Mammary epithelial cell (primary cell): ENCODE measurements at regions of chr17 and their contacts with region 1.

Region 1: GRCh38 chr17:60641810-60642220 is 35.8 kb upstream of the BCAS3 start:
- DNase-seq: peak; percentile 59
- H3K4me3 ChIP-seq: no peak overlapping the region
- H3K27ac ChIP-seq: no peak overlapping the region
- H3K4me1 ChIP-seq: peaks cover 8% of the 10 kb centered on the region
- H3K27me3 ChIP-seq: no peaks in the 10 kb centered on the region
- CTCF ChIP-seq: peak; percentile 35 to 62

Region 2: DNA sequence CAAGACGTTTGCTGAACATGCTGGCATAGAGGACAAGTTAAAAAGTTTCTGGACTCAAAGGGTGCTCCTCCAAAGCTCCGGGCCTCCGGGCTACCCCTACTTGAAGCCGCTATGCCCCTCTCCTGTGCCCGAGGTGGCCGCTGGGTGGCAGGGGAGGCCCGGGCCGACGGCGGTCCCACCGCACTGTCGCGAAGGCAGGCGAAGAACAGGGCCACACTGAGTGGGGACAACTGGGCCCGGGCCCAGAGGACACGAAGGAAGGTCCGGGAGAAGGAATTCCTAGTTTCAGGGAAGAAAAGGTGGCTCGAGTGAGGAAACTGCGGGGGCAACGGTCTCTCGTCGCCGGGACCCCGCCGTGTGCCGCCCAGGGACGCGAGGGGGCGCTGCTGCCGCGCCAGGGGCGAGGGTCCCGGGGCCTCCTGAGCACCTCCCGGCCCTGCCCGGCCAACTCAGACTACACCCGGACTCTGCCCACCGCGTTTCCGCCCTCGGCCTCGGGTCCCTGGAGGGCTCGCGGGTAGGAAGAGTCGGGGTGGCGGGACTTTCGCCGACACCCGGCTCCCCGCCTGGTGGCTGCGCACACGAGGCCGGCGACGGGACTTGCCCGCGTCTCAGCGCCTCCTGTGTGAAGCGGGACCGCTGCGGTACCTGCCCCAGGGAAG is 220.4 kb before region 1 on chr17:
- CTCF ChIA-PET with region 1: no interaction called
- dilution Hi-C with region 1: no loop called
- in situ Hi-C with region 1: no loop called
- intact Hi-C with region 1: loop called (anchors 1 kb)
- DNase-seq: peak; percentile 26
- H3K4me3 ChIP-seq: peak overlapping the region; percentile 29 to 45 (median 35)
- H3K27ac ChIP-seq: no peak overlapping the region
- H3K4me1 ChIP-seq: peaks cover 9% of the 10 kb centered on the region
- H3K27me3 ChIP-seq: no peaks in the 10 kb centered on the region
- CTCF ChIP-seq: peak; percentile 35 to 74

Region 3: GRCh38 chr17:60435244-60436167 is 206.3 kb before region 1 on chr17:
- CTCF ChIA-PET with region 1: no interaction called
- dilution Hi-C with region 1: no loop called
- in situ Hi-C with region 1: no loop called
- intact Hi-C with region 1: loop called (anchors 5 kb)
- DNase-seq: peak; percentile 71
- H3K4me3 ChIP-seq: no peak overlapping the region
- H3K27ac ChIP-seq: no peak overlapping the region
- H3K4me1 ChIP-seq: peaks cover 5% of the 10 kb centered on the region
- H3K27me3 ChIP-seq: peaks cover 2% of the 10 kb centered on the region
- CTCF ChIP-seq: peak; percentile 88 to 89

Region 4: DNA sequence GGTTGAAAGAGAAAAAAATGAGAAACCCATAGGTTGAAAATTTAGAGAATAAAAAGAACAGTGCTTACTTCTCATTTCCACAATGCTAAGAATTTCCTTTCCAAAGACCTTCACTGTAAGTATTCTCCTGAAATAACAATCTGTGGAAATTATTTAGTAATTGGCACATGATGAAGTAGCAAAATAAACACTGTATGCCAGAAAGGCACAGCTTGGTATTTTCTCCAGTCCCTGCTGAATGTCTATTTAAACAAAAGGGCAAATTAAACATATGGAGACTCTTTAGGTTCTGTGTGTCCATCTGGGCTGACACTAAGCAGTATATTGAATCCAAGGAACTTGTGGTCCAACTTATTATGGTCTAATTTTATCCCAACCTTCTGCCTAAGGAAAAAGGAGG is 173.4 kb before region 1 on chr17:
- CTCF ChIA-PET with region 1: no interaction called
- dilution Hi-C with region 1: no loop called
- in situ Hi-C with region 1: loop called in 1 of 2 experiments (anchors 25 kb)
- intact Hi-C with region 1: no loop called
- DNase-seq: no peak
- H3K4me3 ChIP-seq: no peak overlapping the region
- H3K27ac ChIP-seq: no peak overlapping the region
- H3K4me1 ChIP-seq: peaks cover 5% of the 10 kb centered on the region
- H3K27me3 ChIP-seq: no peaks in the 10 kb centered on the region
- CTCF ChIP-seq: no peak

Region 5: GRCh38 chr17:60563746-60564145 is 78.1 kb before region 1 on chr17:
- CTCF ChIA-PET with region 1: no interaction called
- dilution Hi-C with region 1: no loop called
- in situ Hi-C with region 1: no loop called
- intact Hi-C with region 1: loop called (anchors 2 kb)
- DNase-seq: no peak
- H3K4me3 ChIP-seq: no peak overlapping the region
- H3K27ac ChIP-seq: no peak overlapping the region
- H3K4me1 ChIP-seq: no peaks in the 10 kb centered on the region
- H3K27me3 ChIP-seq: no peaks in the 10 kb centered on the region
- CTCF ChIP-seq: no peak

Region 6: DNA sequence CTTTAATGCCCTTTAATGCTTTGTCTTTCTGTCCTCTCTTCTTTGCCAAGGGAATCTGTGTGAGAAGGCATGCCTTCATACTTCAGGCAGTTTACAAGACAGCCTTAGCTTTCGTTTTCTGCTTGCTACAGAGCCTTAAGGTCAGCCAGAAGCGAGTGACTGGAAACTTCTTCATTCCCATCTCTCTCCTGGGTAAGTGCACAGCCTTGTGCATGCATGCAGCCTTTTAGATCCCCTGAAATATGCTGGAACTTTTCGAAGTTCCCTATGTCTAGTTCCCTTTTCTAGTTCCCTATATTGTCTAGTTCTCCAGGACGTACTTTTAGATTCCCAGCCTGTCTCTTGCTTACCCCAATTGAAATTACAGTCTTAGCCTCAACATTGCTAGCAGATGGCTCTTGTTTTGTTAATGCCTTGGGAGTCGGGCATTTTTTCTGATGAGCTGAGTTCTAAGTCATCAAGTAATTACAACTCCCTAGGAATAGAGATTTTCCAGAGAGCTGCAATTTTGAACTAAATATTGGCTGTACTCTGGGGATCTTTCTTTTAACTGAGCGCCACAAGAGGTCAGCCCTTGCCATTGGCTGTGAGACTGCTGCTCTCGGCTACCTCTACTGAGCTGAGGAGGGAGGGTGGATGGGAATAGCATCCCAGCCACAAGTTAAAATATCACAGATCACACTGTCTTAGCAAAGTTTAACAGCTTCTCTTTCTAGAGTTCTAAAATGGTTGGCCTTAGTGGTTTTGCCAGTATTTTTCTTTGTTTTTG is 64.5 kb before region 1 on chr17:
- CTCF ChIA-PET with region 1: interaction called, 3 read pairs
- dilution Hi-C with region 1: no loop called
- in situ Hi-C with region 1: no loop called
- intact Hi-C with region 1: loop called (anchors 2 kb)
- DNase-seq: no peak
- H3K4me3 ChIP-seq: peak overlapping the region; percentile 31 to 41 (median 32)
- H3K27ac ChIP-seq: no peak overlapping the region
- H3K4me1 ChIP-seq: no peaks in the 10 kb centered on the region
- H3K27me3 ChIP-seq: no peaks in the 10 kb centered on the region
- CTCF ChIP-seq: peak in 1 of 2 donors; percentile 23

Region 7: GRCh38 chr17:60599620-60600489 is 42.0 kb before region 1 on chr17 and contains the start of gene PPM1D:
- CTCF ChIA-PET with region 1: no interaction called
- dilution Hi-C with region 1: no loop called
- in situ Hi-C with region 1: no loop called
- intact Hi-C with region 1: loop called (anchors 1 kb)
- DNase-seq: peak; percentile 98
- H3K4me3 ChIP-seq: peak within 1 kb of the TSS; percentile 75 to 90 (median 87)
- H3K27ac ChIP-seq: peak within 1 kb of the TSS; percentile 77
- H3K4me1 ChIP-seq: peaks cover 12% of the 10 kb centered on the region
- H3K27me3 ChIP-seq: no peaks in the 10 kb centered on the region
- CTCF ChIP-seq: no peak
- total RNA-seq, gene PPM1D: 9.3 to 9.5 TPM

Region 8: GRCh38 chr17:61057257-61057656 is 415.4 kb after region 1 on chr17:
- CTCF ChIA-PET with region 1: no interaction called
- dilution Hi-C with region 1: no loop called
- in situ Hi-C with region 1: no loop called
- intact Hi-C with region 1: no loop called
- DNase-seq: peak; percentile 18
- H3K4me3 ChIP-seq: no peak overlapping the region
- H3K27ac ChIP-seq: no peak overlapping the region
- H3K4me1 ChIP-seq: no peaks in the 10 kb centered on the region
- H3K27me3 ChIP-seq: no peaks in the 10 kb centered on the region
- CTCF ChIP-seq: no peak